Cardiac septum (tissue), 1 donor: ENCODE measurements at regions of chr7 and their contacts with region 1.

Region 1: GRCh38 chr7:147245292-147245691 is 1128.7 kb downstream of the CNTNAP2 start:
- DNase-seq: no peak

Region 2: DNA sequence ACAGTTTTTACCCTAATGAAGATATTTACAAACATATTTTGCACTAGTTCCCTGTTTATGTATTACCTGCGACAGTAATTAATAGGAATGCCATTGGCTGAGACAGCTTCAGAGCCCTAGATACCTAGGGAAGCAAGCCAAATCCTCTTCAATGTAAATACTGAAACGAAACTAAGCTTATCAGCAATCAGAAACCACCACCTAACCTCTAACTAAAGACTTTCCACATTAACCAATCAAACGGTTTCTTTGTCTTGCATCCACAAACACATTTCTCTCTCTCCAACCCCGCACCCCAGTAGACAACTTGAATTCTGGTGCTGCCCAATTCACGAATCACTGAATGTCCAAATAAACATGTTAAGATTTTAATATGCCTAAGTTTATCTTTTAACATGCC is 870.9 kb after region 1 on chr7:
- intact Hi-C with region 1: no loop called
- DNase-seq: no peak

Region 3: GRCh38 chr7:148262721-148263229 is 1017.5 kb after region 1 on chr7:
- intact Hi-C with region 1: loop called (anchors 10 kb)
- DNase-seq: peak; percentile 80